Ascending aorta (tissue), 2 donors: ENCODE measurements at regions of chr3 and their contacts with region 1.

Region 1: DNA sequence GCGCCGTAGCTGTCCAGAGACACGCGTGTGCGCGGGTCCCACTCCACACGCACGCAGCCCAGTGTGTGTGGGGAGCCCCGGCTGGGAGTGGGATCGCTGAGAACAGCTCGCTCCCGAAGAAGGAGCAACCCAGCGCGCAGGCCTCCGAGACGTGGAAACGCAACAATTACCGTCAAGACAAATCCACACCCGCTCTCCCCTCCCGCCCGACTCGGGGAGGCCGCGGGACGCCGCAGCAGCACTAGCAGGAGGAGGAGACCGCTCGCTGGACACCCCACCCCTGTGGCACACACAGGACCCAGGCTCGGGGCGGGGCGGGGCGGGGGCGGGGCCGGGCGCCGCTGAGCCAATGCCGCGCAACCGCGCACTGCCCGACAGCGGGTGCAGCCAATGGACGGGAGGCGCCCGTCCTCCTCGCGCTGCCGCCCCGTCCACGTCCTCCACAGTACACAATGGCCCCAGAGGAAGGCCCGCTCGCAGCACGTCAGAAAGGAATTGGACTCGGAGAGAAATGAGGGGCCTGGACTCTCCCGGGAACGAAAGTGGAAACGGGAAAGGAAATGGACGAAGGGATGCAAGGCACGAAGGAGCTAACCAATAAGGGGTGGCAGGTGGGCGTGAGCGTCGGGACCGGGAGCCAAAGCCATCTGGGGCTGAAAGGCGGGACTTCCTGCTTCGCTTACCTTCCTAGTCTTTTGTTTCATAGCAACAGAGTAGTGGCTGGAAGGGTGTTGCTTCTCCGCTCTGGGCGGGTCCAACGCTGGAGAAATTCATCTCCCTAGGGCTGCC is at the start of gene CBLB:
- DNase-seq: peak; percentile 84 to 96
- H3K4me3 ChIP-seq: peak within 1 kb of the TSS; percentile 97 to 100
- H3K27ac ChIP-seq: peak within 1 kb of the TSS; percentile 98 to 99
- H3K4me1 ChIP-seq: peaks cover 0 to 18% of the 10 kb centered on the region in 2 donors
- H3K27me3 ChIP-seq: no peaks in the 10 kb centered on the region
- CTCF ChIP-seq: no peak
- total RNA-seq, gene CBLB: 30.0 TPM

Region 2: DNA sequence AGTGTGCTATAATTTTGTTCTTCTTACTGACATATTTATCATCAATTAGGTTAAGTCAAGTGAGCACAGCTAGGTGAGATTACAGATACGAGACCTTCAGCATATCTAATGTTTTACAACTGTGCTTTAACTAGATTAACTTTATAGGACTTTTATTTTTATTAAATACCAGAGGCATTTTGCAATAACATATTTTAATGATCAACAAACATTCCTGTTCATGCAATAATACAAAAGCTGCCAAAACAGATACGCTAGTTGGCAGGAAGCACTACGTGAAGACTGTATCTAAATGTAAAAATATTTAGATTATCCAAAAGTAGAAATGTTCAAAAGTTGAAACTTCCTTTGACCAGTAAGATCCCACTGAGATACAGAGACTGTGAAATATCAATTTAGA is 139.3 kb before region 1 on chr3:
- intact Hi-C with region 1: loop called (anchors 10 kb)
- DNase-seq: no peak
- H3K4me3 ChIP-seq: no peak overlapping the region
- H3K27ac ChIP-seq: peak overlapping the region in 1 of 2 donors; percentile 18
- H3K4me1 ChIP-seq: peaks cover 0 to 15% of the 10 kb centered on the region in 2 donors
- H3K27me3 ChIP-seq: no peaks in the 10 kb centered on the region
- CTCF ChIP-seq: no peak

Region 3: DNA sequence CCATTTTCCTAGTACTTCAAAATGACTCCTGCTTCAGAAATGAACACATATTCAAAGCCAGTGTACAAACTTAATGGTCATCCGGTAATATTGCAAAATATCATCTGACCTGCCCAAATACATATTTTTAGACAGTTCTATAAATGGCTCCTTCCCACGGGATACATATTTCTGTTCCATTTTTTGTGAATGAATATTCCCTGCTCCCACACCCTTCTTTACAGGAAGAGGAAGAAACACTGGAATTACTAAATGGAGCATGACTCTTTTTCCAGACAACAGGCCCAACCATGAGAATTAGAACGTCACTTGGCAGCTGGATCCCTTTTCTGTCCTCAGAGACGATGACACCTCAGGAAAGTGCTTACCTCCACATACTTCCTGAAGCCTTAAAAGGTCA is 37.9 kb after region 1 on chr3:
- intact Hi-C with region 1: loop called (anchors 1 kb)
- DNase-seq: peak; percentile 29 to 90
- H3K4me3 ChIP-seq: no peak overlapping the region
- H3K27ac ChIP-seq: peak overlapping the region; percentile 86 to 91
- H3K4me1 ChIP-seq: peaks cover 11 to 30% of the 10 kb centered on the region in 2 donors
- H3K27me3 ChIP-seq: no peaks in the 10 kb centered on the region
- CTCF ChIP-seq: no peak

Region 4: GRCh38 chr3:106130384-106131198 is 261.7 kb after region 1 on chr3:
- intact Hi-C with region 1: loop called (anchors 5 kb)
- DNase-seq: no peak
- H3K4me3 ChIP-seq: no peak overlapping the region
- H3K27ac ChIP-seq: no peak overlapping the region
- H3K4me1 ChIP-seq: peaks cover 0 to 11% of the 10 kb centered on the region in 2 donors
- H3K27me3 ChIP-seq: no peaks in the 10 kb centered on the region
- CTCF ChIP-seq: no peak

Region 5: GRCh38 chr3:106345353-106346027 is 476.6 kb after region 1 on chr3:
- intact Hi-C with region 1: loop called (anchors 5 kb)
- DNase-seq: no peak
- H3K4me3 ChIP-seq: no peak overlapping the region
- H3K27ac ChIP-seq: peak overlapping the region; percentile 37 to 39
- H3K4me1 ChIP-seq: peaks cover 0 to 3% of the 10 kb centered on the region in 2 donors
- H3K27me3 ChIP-seq: no peaks in the 10 kb centered on the region
- CTCF ChIP-seq: no peak